ENCODE measurements at regions of chr11 and their contacts with region 1.

Region 1: GRCh38 chr11:117226388-117227385 is 5.2 kb downstream of the PCSK7 start:
- DNase-seq: peak; percentile 67 to 71
- ATAC-seq: peak; percentile 91 to 93
- H3K4me3 ChIP-seq: no peak overlapping the region
- H3K27ac ChIP-seq: no peak overlapping the region
- H3K4me1 ChIP-seq: peaks cover 7% of the 10 kb centered on the region; the same call in 1 of the 3 replicates
- CTCF ChIP-seq: peak; percentile 72
- EP300 ChIP-seq: no peak
- POLR2A ChIP-seq: no peak
- RAD21 ChIP-seq: peak; percentile 77 to 83

Region 2: DNA sequence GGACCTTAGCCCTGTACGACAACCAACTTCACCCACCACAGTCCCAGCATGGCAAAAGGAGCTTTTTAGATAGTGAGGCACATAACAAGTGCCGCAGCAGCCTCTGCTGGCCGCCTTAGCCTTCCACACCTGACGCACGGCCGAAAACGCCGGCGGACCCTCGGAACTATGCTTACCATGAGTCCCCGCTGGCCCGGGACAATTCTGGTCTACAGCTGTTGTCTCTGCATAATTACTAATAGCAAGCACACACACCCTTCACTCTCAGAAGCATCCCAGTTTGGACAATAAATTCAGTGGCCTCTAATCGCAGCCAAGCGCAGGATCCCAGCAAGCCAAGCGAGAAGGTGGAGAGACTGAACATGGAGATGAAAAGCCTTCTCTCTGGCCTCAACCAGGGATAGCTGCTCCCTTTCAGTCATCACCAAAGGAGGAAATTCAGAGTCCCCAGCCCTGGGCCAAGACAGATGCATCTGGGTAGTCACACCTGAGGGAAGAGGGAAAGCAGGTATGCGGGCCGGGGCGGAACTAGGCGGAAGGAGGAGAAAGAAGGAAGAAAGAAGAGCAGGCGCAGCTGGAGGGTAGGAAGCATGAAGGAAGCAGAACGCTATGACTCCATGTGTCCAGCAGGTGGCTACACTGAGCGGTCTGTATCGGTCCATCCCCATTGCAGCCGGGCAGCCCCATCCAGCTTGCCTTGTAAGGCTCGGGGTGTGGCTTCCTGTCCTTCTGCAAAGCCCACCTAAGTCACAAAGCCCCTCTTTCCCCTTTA is 494.2 kb before region 1 on chr11:
- CTCF ChIA-PET with region 1: interaction called, 24 read pairs
- POLR2A ChIA-PET with region 1: no interaction called
- DNase-seq: peak; percentile 62 to 67
- ATAC-seq: peak; percentile 84 to 94
- H3K4me3 ChIP-seq: no peak overlapping the region
- H3K27ac ChIP-seq: no peak overlapping the region
- H3K4me1 ChIP-seq: no peaks in the 10 kb centered on the region
- CTCF ChIP-seq: peak; percentile 54
- EP300 ChIP-seq: no peak
- POLR2A ChIP-seq: no peak
- RAD21 ChIP-seq: peak; percentile 30 to 39; a peak in 2 of 5 replicates

Region 3: DNA sequence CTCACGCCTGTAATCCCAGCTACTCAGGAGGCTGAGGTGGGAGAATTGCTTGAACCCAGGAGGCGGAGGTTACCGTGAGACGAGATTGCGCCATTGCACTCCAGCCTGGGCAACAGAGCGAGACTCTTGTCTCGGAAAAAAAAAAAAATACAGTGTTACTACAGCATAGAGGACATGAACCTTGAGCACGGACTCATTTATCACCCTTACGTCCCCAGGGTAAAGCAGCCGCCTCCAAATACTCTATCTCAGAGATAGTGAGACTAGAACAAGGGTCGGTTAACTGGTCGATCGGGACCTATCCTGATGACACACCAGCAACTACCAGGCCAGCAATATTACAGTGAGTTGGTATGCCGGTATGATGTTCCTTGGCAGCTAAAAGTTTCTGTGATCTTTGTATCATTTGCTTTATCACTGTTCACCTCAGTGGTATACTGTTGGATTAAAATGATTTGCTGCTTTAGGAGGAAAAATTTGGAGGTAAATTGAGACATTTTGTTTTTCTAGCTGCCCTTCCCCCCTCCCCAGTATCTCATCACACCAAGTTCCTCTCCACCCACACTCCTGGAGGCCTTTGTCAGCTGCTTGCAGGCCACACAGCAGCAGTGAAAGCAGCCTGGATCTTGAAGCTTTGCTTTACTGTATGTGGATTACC is 55.2 kb before region 1 on chr11:
- CTCF ChIA-PET with region 1: interaction called, 23 read pairs
- POLR2A ChIA-PET with region 1: interaction called, 4 read pairs
- DNase-seq: no peak
- ATAC-seq: no peak
- H3K4me3 ChIP-seq: no peak overlapping the region
- H3K27ac ChIP-seq: no peak overlapping the region
- H3K4me1 ChIP-seq: no peaks in the 10 kb centered on the region
- CTCF ChIP-seq: no peak
- EP300 ChIP-seq: no peak
- POLR2A ChIP-seq: no peak
- RAD21 ChIP-seq: no peak

Region 4: DNA sequence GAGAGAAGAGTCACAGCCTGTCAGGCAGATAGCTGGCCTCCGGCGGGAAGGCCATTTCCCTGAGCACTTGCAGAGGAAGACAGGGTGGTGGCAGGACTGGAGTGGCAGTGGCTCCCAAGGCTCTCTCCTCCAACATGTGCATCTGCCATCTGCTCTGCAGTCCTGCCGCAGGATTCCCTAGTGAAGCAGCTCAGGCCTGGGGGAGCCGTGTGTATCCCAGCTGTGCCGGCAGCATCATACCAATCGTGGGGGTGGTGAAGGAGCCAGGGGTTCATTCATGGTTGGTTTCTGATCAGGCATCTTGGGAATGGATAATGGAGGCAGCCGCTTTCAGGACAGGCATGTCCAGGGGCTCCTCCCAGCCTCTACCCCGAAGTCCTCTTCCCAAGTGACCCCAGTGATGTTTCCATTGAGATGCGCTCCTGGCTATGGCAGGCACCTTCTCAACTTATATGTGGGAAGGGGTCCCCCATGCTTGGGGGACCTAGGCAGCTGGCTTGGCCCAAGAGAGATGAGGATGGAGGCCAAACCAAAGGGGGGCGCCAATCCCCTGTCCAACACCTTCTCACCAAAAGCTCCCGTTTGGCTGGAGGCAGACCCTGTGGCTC is 21.4 kb before region 1 on chr11:
- CTCF ChIA-PET with region 1: interaction called, 23 read pairs
- POLR2A ChIA-PET with region 1: no interaction called
- DNase-seq: no peak
- ATAC-seq: no peak
- H3K4me3 ChIP-seq: no peak overlapping the region
- H3K27ac ChIP-seq: no peak overlapping the region
- H3K4me1 ChIP-seq: peaks cover 3% of the 10 kb centered on the region; the same call in 1 of the 3 replicates
- CTCF ChIP-seq: no peak
- EP300 ChIP-seq: no peak
- POLR2A ChIP-seq: no peak
- RAD21 ChIP-seq: no peak

Region 5: GRCh38 chr11:117239300-117239699 is 12.6 kb after region 1 on chr11:
- CTCF ChIA-PET with region 1: interaction called, 13 read pairs
- POLR2A ChIA-PET with region 1: no interaction called
- DNase-seq: peak; percentile 37 to 71
- ATAC-seq: peak; percentile 97 to 98
- H3K4me3 ChIP-seq: no peak overlapping the region
- H3K27ac ChIP-seq: no peak overlapping the region
- H3K4me1 ChIP-seq: peaks cover 8% of the 10 kb centered on the region
- CTCF ChIP-seq: 0 out of 3 replicates have a peak, but pooled peaks have one; percentile 12
- EP300 ChIP-seq: no peak
- POLR2A ChIP-seq: no peak
- RAD21 ChIP-seq: no peak